CD8-positive, alpha-beta memory T cell (primary cell): ENCODE measurements at regions of chr3 and their contacts with region 1.

Region 1: GRCh38 chr3:52220380-52221026 is 4.9 kb downstream of the TLR9 start:
- DNase-seq: peak; percentile 77 to 89 (median 82)
- H3K4me3 ChIP-seq: no peak overlapping the region
- H3K4me3 Mint-ChIP-seq: peak overlapping the region; percentile 46 to 81 (median 69)
- H3K27ac ChIP-seq: no peak overlapping the region
- H3K27ac Mint-ChIP-seq: peak overlapping the region in 7 of 8 donors; percentile 26 to 91 (median 85)
- H3K4me1 ChIP-seq: peaks cover 91% of the 10 kb centered on the region
- H3K4me1 Mint-ChIP-seq: peaks cover 79 to 93% (median 81%) of the 10 kb centered on the region in 3 donors
- H3K27me3 ChIP-seq: no peaks in the 10 kb centered on the region
- H3K27me3 Mint-ChIP-seq: no peaks in the 10 kb centered on the region

Region 2: DNA sequence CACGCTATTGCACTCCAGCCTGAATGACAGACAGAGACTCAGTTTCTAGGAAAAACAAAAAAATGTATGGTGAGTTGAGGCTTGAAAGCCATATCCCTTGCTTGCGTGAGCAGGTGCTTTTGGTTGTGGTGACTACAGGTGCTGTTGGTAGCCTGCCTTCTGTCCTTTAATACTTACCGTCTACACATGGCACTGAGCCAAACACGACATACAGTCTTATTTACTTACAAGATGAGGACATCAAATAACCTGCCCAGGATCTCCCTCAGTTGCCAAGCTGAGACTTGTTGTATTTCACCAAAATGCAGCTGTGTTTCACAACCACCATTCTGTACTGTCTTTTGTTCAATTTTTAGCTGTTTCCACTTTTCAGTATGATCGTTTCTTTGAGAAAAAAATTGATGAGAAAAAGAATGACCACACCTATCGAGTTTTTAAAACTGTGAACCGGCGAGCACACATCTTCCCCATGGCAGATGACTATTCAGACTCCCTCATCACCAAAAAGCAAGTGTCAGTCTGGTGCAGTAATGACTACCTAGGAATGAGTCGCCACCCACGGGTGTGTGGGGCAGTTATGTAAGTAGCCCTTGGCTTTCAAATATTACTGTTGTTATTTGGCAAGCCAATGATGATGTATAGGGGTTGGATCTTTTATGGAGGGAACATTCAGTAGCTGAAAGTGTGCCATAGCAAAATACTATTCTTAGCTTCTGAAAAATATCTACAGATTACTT is 16.0 kb before region 1 on chr3:
- CTCF ChIA-PET with region 1: interaction called, 25 read pairs
- POLR2A ChIA-PET with region 1: interaction called, 3 read pairs
- DNase-seq: no peak
- H3K4me3 ChIP-seq: no peak overlapping the region
- H3K4me3 Mint-ChIP-seq: peak overlapping the region in 2 of 7 donors; percentile 34 to 61
- H3K27ac ChIP-seq: no peak overlapping the region
- H3K27ac Mint-ChIP-seq: peak overlapping the region in 5 of 8 donors; percentile 5 to 73 (median 7)
- H3K4me1 ChIP-seq: peaks cover 10% of the 10 kb centered on the region
- H3K4me1 Mint-ChIP-seq: peaks cover 16 to 41% (median 27%) of the 10 kb centered on the region in 3 donors
- H3K27me3 ChIP-seq: no peaks in the 10 kb centered on the region
- H3K27me3 Mint-ChIP-seq: no peaks in the 10 kb centered on the region

Region 3: DNA sequence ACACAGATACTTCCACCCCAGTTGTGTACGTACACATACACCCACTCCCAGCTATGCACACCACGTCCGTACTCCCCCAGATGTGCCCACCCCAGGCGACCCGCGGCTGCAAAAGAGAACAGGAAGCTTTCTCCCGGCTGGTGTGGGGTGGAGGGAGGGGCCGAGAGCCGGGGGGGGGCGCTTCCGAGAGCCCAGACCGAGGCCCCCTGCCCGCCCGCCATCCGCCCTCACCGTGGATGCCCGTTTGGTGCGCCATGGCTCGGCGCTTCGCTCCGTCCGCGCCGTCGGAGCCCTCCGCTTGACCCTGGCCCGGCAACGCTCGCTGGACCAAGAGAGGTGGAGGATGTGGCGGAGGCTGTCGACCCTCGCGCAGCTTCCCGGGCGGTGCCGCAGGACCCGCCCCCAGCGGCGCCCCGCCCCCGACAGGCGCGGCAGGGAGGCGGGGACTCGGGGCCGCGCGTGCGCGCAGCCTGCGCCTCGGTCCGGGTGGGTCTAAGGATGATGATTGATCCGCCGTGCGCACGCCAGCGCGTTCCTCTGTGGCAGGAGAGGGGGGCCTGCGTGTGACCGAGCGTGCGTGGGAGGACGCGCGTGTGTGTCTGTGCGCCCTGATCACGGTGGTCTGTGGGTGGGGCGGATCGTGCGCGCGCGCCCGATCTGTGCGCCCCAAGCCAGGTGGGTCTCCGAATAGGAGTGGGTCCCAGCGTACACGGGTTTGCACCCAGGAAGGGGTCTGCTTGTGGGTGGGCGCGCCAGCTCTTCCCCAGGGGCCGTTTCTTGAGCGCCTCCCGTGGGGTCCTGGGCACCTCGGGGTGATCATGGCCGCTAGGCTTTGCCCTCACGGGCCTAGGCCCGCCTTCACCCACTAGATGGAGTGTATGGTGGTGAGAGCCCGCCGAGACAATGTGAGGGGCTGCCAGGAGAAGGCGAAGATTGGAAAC is 18.5 kb after region 1 on chr3 and contains the start of gene TWF2:
- CTCF ChIA-PET with region 1: interaction called, 68 read pairs
- POLR2A ChIA-PET with region 1: interaction called, 8 read pairs
- DNase-seq: peak; percentile 82 to 94 (median 88)
- H3K4me3 ChIP-seq: peak within 1 kb of the TSS; percentile 96
- H3K4me3 Mint-ChIP-seq: peak within 1 kb of the TSS; percentile 96 to 99 (median 98)
- H3K27ac ChIP-seq: peak within 1 kb of the TSS; percentile 83
- H3K27ac Mint-ChIP-seq: peak within 1 kb of the TSS; percentile 88 to 99 (median 96)
- H3K4me1 ChIP-seq: peaks cover 76% of the 10 kb centered on the region
- H3K4me1 Mint-ChIP-seq: peaks cover 72 to 88% (median 83%) of the 10 kb centered on the region in 3 donors
- H3K27me3 ChIP-seq: no peaks in the 10 kb centered on the region
- H3K27me3 Mint-ChIP-seq: peaks cover 0 to 2% of the 10 kb centered on the region in 2 donors
- total RNA-seq, gene TWF2: 98.2 to 101 TPM

Region 4: GRCh38 chr3:52278510-52279069 is 58.1 kb after region 1 on chr3 and contains the start of gene WDR82:
- CTCF ChIA-PET with region 1: interaction called, 20 read pairs
- POLR2A ChIA-PET with region 1: interaction called, 17 read pairs
- DNase-seq: peak; percentile 95 to 99 (median 96)
- H3K4me3 ChIP-seq: peak within 1 kb of the TSS; percentile 79
- H3K4me3 Mint-ChIP-seq: peak within 1 kb of the TSS; percentile 93 to 100 (median 97)
- H3K27ac ChIP-seq: peak within 1 kb of the TSS; percentile 84
- H3K27ac Mint-ChIP-seq: peak within 1 kb of the TSS; percentile 90 to 100 (median 99)
- H3K4me1 ChIP-seq: peaks cover 55% of the 10 kb centered on the region
- H3K4me1 Mint-ChIP-seq: peaks cover 58 to 80% (median 69%) of the 10 kb centered on the region in 3 donors
- H3K27me3 ChIP-seq: no peaks in the 10 kb centered on the region
- H3K27me3 Mint-ChIP-seq: peaks cover 0 to 2% of the 10 kb centered on the region in 2 donors
- total RNA-seq, gene WDR82: 133 to 140 TPM

Region 5: GRCh38 chr3:52291508-52292181 is 71.1 kb after region 1 on chr3:
- CTCF ChIA-PET with region 1: interaction called, 33 read pairs
- POLR2A ChIA-PET with region 1: interaction called, 4 read pairs
- DNase-seq: peak in 4 of 5 donors; percentile 17 to 72 (median 48)
- H3K4me3 ChIP-seq: no peak overlapping the region
- H3K4me3 Mint-ChIP-seq: peak overlapping the region in 4 of 7 donors; percentile 30 to 78 (median 60)
- H3K27ac ChIP-seq: no peak overlapping the region
- H3K27ac Mint-ChIP-seq: peak overlapping the region in 4 of 8 donors; percentile 27 to 89 (median 46)
- H3K4me1 ChIP-seq: peaks cover 28% of the 10 kb centered on the region
- H3K4me1 Mint-ChIP-seq: peaks cover 31 to 46% (median 35%) of the 10 kb centered on the region in 3 donors
- H3K27me3 ChIP-seq: no peaks in the 10 kb centered on the region
- H3K27me3 Mint-ChIP-seq: peaks cover 0 to 3% of the 10 kb centered on the region in 2 donors

Region 6: DNA sequence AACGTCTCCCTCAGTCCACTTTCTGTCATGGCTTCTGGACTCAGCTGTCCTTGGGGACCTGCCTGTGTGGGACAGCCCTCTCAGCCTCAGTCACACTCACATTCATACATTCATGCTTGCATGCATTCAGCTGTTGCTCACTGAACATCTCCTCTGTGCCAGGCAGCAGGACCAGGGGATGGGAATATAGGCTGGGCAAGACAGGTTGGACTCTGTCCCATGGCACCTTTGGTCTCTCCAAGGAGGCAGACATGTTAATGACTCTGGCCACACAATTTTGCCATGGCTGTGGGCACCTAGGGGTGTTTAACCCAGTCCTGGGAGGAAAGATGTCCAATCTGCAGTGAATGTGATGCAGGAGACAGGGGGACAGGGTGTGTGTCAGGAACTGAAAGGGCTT is 87.8 kb after region 1 on chr3:
- CTCF ChIA-PET with region 1: no interaction called
- POLR2A ChIA-PET with region 1: no interaction called
- DNase-seq: no peak
- H3K4me3 ChIP-seq: no peak overlapping the region
- H3K4me3 Mint-ChIP-seq: no peak overlapping the region
- H3K27ac ChIP-seq: no peak overlapping the region
- H3K27ac Mint-ChIP-seq: peak overlapping the region in 6 of 8 donors; percentile 30 to 94 (median 80)
- H3K4me1 ChIP-seq: peaks cover 32% of the 10 kb centered on the region
- H3K4me1 Mint-ChIP-seq: peaks cover 40 to 61% (median 51%) of the 10 kb centered on the region in 3 donors
- H3K27me3 ChIP-seq: no peaks in the 10 kb centered on the region
- H3K27me3 Mint-ChIP-seq: no peaks in the 10 kb centered on the region

Region 7: GRCh38 chr3:52446631-52447511 is 226.4 kb after region 1 on chr3:
- CTCF ChIA-PET with region 1: interaction called, 10 read pairs
- POLR2A ChIA-PET with region 1: no interaction called
- DNase-seq: peak; percentile 59 to 79 (median 65)
- H3K4me3 ChIP-seq: no peak overlapping the region
- H3K4me3 Mint-ChIP-seq: peak overlapping the region in 1 of 7 donors; percentile 15
- H3K27ac ChIP-seq: no peak overlapping the region
- H3K27ac Mint-ChIP-seq: peak overlapping the region in 4 of 8 donors; percentile 0 to 92 (median 29)
- H3K4me1 ChIP-seq: peaks cover 12% of the 10 kb centered on the region
- H3K4me1 Mint-ChIP-seq: peaks cover 7 to 10% (median 9%) of the 10 kb centered on the region in 3 donors
- H3K27me3 ChIP-seq: no peaks in the 10 kb centered on the region
- H3K27me3 Mint-ChIP-seq: peaks cover 0 to 1% of the 10 kb centered on the region in 2 donors